ENCODE measurements at regions of chr17 and their contacts with region 1.

Region 1: DNA sequence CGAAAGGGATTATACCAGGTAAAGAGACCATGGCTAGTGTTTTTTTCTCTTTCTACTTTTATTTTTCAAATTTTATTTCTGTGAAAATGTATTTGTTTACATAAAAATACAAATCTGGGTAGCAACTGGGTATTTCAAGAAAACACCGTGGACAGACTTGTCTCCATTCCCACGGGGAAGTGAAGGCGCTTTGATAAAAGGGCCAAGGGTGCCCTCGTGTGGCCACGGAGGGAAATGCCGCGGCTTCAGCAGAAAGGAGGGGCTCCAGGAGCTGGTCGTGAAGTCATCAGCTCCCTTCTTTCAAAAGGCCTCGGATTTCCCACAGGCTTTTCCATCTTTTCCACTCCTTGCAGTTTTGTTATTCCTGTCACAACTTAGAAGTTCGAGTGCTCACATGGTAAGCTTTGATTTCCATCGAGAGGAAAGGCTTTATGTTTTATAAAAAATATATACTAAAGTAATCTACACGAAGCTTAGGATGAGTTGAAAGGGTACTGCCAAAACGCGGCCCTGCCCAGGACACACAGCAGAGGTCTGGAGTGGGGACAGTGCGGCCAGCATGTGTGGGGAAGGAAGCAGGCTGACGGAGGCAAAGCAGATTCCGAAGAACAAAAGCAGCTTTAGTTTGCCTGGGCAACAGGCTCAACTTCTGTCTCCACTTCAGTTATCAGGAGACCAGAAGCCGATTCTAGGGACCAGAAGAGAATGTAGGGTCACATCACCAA is 15.3 kb upstream of the MNT start:
- DNase-seq: peak; percentile 63
- H3K4me3 ChIP-seq: no peak overlapping the region
- H3K27me3 ChIP-seq: no peaks in the 10 kb centered on the region
- CTCF ChIP-seq: peak; percentile 94

Region 2: GRCh38 chr17:2369551-2370210 is 46.5 kb before region 1 on chr17:
- CTCF ChIA-PET with region 1: interaction called, 19 read pairs
- POLR2A ChIA-PET with region 1: no interaction called
- DNase-seq: no peak
- H3K4me3 ChIP-seq: no peak overlapping the region
- H3K27me3 ChIP-seq: no peaks in the 10 kb centered on the region
- CTCF ChIP-seq: peak; percentile 12; the same call in 1 of the 2 replicates

Region 3: GRCh38 chr17:2392252-2393173 is 23.7 kb before region 1 on chr17:
- CTCF ChIA-PET with region 1: interaction called, 356 read pairs
- POLR2A ChIA-PET with region 1: no interaction called
- DNase-seq: peak; percentile 60
- H3K4me3 ChIP-seq: peak overlapping the region; percentile 53
- H3K27me3 ChIP-seq: no peaks in the 10 kb centered on the region
- CTCF ChIP-seq: no peak

Measured in BJ (cell line).